Heart right ventricle (tissue), 16 donors: ENCODE measurements at regions of chr15 and their contacts with region 1.

Region 1: GRCh38 chr15:56245871-56246814 is 2.5 kb upstream of the RFX7 start:
- DNase-seq: peak; percentile 88 to 89
- ATAC-seq: peak; percentile 56 to 90 (median 86)
- H3K4me3 ChIP-seq: peak overlapping the region in 8 of 10 donors; percentile 15 to 78 (median 47)
- H3K27ac ChIP-seq: peak overlapping the region in 7 of 10 donors; percentile 39 to 95 (median 67)
- H3K4me1 ChIP-seq: peaks cover 3 to 40% (median 25%) of the 10 kb centered on the region in 9 donors
- H3K27me3 ChIP-seq: no peaks in the 10 kb centered on the region
- CTCF ChIP-seq: peak; percentile 98 to 100 (median 100)

Region 2: DNA sequence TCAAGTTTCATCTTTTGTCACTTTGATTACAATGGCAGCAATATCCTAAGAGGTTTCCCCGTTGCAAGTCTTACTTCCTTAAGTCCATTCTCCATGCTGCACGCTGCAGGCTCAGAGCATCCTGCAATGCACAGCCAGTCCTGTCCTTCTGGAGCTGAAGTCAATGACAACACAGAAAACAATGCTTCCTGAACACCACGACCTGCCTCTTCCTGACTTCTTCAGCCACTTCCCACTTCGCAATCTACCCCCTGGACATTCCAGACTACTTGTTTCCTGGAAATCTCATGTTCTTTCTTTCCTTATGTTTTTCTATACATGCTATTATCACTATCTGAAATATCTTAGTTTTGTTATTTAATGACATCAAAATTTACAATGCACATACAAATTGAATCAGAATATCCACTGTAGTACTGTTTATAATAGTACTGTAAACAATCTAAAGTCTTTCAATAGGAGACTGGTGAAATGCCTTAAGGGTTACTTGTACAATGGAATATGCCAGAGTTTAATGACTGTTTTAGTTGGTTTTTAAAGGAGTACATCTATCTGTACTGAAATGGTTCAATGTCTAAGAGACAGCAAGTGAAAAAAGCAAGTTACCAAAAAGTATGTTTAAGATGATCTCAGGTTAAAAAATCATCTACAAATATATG is 389.5 kb before region 1 on chr15:
- intact Hi-C with region 1: no loop called
- DNase-seq: peak in 1 of 2 donors; percentile 9
- ATAC-seq: peak in 2 of 8 donors; percentile 44 to 68
- H3K4me3 ChIP-seq: no peak overlapping the region
- H3K27ac ChIP-seq: peak overlapping the region in 1 of 10 donors; percentile 44
- H3K4me1 ChIP-seq: peaks cover 0 to 6% (median 0%) of the 10 kb centered on the region in 9 donors
- H3K27me3 ChIP-seq: no peaks in the 10 kb centered on the region
- CTCF ChIP-seq: no peak

Region 3: GRCh38 chr15:55999636-56000035 is 246.5 kb before region 1 on chr15:
- intact Hi-C with region 1: loop called in 6 of 10 experiments (anchors 5 to 10 kb)
- DNase-seq: no peak
- ATAC-seq: no peak
- H3K4me3 ChIP-seq: no peak overlapping the region
- H3K27ac ChIP-seq: no peak overlapping the region
- H3K4me1 ChIP-seq: peaks cover 0 to 4% (median 2%) of the 10 kb centered on the region in 9 donors
- H3K27me3 ChIP-seq: no peaks in the 10 kb centered on the region
- CTCF ChIP-seq: no peak

Region 4: DNA sequence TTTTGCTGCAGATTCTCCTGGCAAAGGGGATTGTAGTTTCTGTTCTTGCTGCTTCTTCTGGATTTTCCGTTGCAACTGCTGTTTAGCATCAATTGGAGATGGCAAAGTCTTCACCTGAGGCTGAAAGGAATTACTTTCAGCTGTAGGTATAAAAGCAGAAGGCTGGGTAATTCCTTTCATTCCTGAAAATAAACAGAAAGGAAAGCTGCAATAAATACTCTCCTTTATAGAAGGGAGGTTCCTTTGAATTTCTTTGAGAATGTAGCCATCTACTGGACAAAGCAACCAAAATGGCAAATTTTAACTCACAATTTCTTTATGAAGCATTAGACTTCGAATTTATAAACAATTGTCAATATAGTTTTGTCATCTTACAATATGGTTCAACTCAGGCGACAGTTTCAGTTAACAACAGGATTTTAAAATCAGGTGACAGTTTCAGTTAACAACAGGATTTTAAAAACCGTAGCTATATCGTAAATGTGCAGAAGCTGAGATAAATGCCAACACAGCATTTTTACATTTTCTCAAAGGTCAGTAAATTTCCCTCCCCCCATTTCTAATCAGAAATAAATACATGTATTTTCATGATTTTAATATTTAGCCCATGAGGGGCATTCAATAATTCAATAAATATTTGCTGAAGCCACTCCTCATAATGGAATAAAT is 147.8 kb before region 1 on chr15:
- intact Hi-C with region 1: loop called in 3 of 10 experiments (anchors 5 to 10 kb)
- DNase-seq: no peak
- ATAC-seq: no peak
- H3K4me3 ChIP-seq: no peak overlapping the region
- H3K27ac ChIP-seq: no peak overlapping the region
- H3K4me1 ChIP-seq: peaks cover 0 to 22% (median 10%) of the 10 kb centered on the region in 9 donors
- H3K27me3 ChIP-seq: no peaks in the 10 kb centered on the region
- CTCF ChIP-seq: peak in 1 of 9 donors; percentile 14

Region 5: GRCh38 chr15:56124391-56124790 is 121.8 kb before region 1 on chr15:
- intact Hi-C with region 1: loop called in 1 of 10 experiments (anchors 10 kb)
- DNase-seq: no peak
- ATAC-seq: no peak
- H3K4me3 ChIP-seq: no peak overlapping the region
- H3K27ac ChIP-seq: no peak overlapping the region
- H3K4me1 ChIP-seq: no peaks in the 10 kb centered on the region
- H3K27me3 ChIP-seq: no peaks in the 10 kb centered on the region
- CTCF ChIP-seq: no peak

Region 6: GRCh38 chr15:56428821-56429458 is 182.8 kb after region 1 on chr15:
- intact Hi-C with region 1: loop called in 8 of 10 experiments (anchors 5 to 10 kb)
- DNase-seq: no peak
- ATAC-seq: no peak
- H3K4me3 ChIP-seq: no peak overlapping the region
- H3K27ac ChIP-seq: no peak overlapping the region
- H3K4me1 ChIP-seq: no peaks in the 10 kb centered on the region
- H3K27me3 ChIP-seq: no peaks in the 10 kb centered on the region
- CTCF ChIP-seq: peak in 7 of 9 donors; percentile 37 to 67 (median 54)